ENCODE measurements at regions of chr11 and their contacts with region 1.

Region 1: DNA sequence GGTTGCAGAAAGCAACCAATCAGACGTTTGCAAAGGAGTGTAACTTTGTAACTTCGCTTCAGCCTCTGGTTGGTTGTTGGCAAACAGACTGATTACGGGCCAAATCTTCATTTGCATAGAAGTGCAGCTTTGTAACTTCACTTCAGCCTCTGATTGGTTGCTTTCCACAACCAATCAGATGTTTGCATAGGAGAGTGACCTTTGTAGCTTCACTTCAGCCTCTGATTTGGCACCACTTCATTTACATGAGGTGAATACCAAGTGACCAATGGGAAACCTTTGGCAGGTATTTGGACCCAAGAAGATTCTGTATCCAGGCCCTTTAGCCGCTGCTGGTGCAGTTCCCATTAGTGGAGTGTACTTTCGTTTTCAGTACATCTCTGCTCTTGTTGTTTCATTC is 16.0 kb downstream of the USP47 start:
- DNase-seq: no peak
- ATAC-seq: peak; percentile 80
- H3K4me3 ChIP-seq: peak overlapping the region; percentile 38 to 40
- H3K27ac ChIP-seq: peak overlapping the region; percentile 75
- H3K4me1 ChIP-seq: peaks cover 51% of the 10 kb centered on the region
- H3K27me3 ChIP-seq: no peaks in the 10 kb centered on the region
- CTCF ChIP-seq: no peak

Region 2: DNA sequence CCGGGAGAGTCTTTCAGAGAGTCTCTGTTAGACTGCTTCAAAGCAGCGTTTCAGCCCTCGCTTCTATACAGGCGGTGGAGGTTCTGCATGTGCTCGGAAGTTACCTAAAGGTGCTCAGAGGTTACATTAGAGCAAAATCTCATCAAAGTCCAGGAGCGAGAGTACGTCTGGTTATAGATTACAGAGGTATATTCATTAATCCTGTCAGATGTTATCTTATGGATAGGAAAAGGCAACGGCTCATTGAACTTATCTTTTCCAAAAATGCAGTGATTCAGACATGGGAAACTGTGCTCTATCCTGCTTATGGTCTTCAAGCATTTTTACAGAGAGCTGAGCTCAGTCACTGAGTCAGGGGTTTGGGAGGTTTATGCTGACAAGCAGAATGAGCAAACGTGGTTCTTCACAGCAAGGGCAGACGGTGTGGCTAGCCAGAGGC is 990.9 kb before region 1 on chr11:
- CTCF ChIA-PET with region 1: interaction called, 10 read pairs
- POLR2A ChIA-PET with region 1: no interaction called
- in situ Hi-C with region 1: no loop called
- intact Hi-C with region 1: no loop called
- DNase-seq: no peak
- ATAC-seq: peak; percentile 77
- H3K4me3 ChIP-seq: no peak overlapping the region
- H3K27ac ChIP-seq: peak overlapping the region; percentile 82
- H3K4me1 ChIP-seq: peaks cover 42% of the 10 kb centered on the region
- H3K27me3 ChIP-seq: no peaks in the 10 kb centered on the region
- CTCF ChIP-seq: no peak

Region 3: DNA sequence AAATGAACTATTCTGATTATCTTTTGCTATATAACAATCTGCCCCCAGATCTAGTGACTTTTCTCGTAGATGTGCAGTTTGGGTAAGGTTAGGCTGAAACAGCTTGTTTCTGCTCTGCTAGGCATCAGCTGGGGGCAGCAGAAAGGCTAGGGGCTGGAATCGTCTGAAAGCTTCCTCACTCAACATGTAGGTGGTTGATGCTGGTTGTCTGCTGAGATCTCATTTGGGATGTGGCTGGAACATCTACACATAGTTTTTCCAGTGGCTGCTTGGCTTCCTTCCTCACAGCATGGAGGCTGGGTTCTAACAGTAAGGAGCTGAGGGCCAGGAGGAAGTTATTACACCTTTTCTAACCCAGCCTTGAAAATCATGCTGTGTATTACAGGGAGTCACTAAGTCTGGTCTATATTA is 14.2 kb after region 1 on chr11:
- CTCF ChIA-PET with region 1: no interaction called
- POLR2A ChIA-PET with region 1: no interaction called
- in situ Hi-C with region 1: no loop called
- intact Hi-C with region 1: no loop called
- DNase-seq: no peak
- ATAC-seq: peak; percentile 68
- H3K4me3 ChIP-seq: no peak overlapping the region
- H3K27ac ChIP-seq: peak overlapping the region; percentile 21; the same call in 1 of the 2 replicates
- H3K4me1 ChIP-seq: peaks cover 21% of the 10 kb centered on the region
- H3K27me3 ChIP-seq: no peaks in the 10 kb centered on the region
- CTCF ChIP-seq: no peak

Region 4: GRCh38 chr11:12248338-12248737 is 390.6 kb after region 1 on chr11:
- CTCF ChIA-PET with region 1: no interaction called
- POLR2A ChIA-PET with region 1: no interaction called
- in situ Hi-C with region 1: no loop called
- intact Hi-C with region 1: no loop called
- DNase-seq: no peak
- ATAC-seq: no peak
- H3K4me3 ChIP-seq: no peak overlapping the region
- H3K27ac ChIP-seq: no peak overlapping the region
- H3K4me1 ChIP-seq: no peaks in the 10 kb centered on the region; the same call in 1 of the 2 replicates
- H3K27me3 ChIP-seq: no peaks in the 10 kb centered on the region
- CTCF ChIP-seq: no peak

Measured in Panc1 (cell line).